ENCODE measurements at regions of chr17 and their contacts with region 1.

Region 1: GRCh38 chr17:57243171-57243948 is 13.0 kb upstream of the MSI2 start:
- DNase-seq: peak; percentile 79
- H3K4me3 Mint-ChIP-seq: no peak overlapping the region
- H3K27ac Mint-ChIP-seq: no peak overlapping the region
- H3K4me1 Mint-ChIP-seq: peaks cover 8% of the 10 kb centered on the region
- H3K27me3 Mint-ChIP-seq: peaks cover 23% of the 10 kb centered on the region

Region 2: GRCh38 chr17:57255776-57256681 is 12.7 kb after region 1 on chr17 and contains the start of gene MSI2:
- CTCF ChIA-PET with region 1: interaction called, 18 read pairs
- POLR2A ChIA-PET with region 1: no interaction called
- DNase-seq: peak; percentile 91
- H3K4me3 Mint-ChIP-seq: peak within 1 kb of the TSS; percentile 85
- H3K27ac Mint-ChIP-seq: peak within 1 kb of the TSS; percentile 93
- H3K4me1 Mint-ChIP-seq: peaks cover 46% of the 10 kb centered on the region
- H3K27me3 Mint-ChIP-seq: peaks cover 10% of the 10 kb centered on the region
- total RNA-seq, gene MSI2: 87.6 to 96.0 TPM

Region 3: GRCh38 chr17:57440522-57441485 is 197.4 kb after region 1 on chr17:
- CTCF ChIA-PET with region 1: interaction called, 11 read pairs
- POLR2A ChIA-PET with region 1: no interaction called
- DNase-seq: peak; percentile 58
- H3K4me3 Mint-ChIP-seq: no peak overlapping the region
- H3K27ac Mint-ChIP-seq: peak overlapping the region; percentile 88
- H3K4me1 Mint-ChIP-seq: peaks cover 68% of the 10 kb centered on the region
- H3K27me3 Mint-ChIP-seq: no peaks in the 10 kb centered on the region

Measured in activated CD4-positive, alpha-beta T cell treated with anti-CD3 and anti-CD28 coated beads, Interleukin-2, amount 10 ng/mL, durations not matched to agents 7 days and 5 days (primary cell).